ENCODE measurements at regions of chr7 and their contacts with region 1.

Region 1: GRCh38 chr7:116671681-116672595 is at the start of gene MET:
- DNase-seq: no peak
- H3K4me3 ChIP-seq: peak within 1 kb of the TSS; percentile 49 to 83 (median 67)
- H3K27ac ChIP-seq: peak within 1 kb of the TSS; percentile 80 to 89 (median 87)
- H3K4me1 ChIP-seq: peaks cover 6 to 37% (median 11%) of the 10 kb centered on the region in 3 donors
- H3K27me3 ChIP-seq: peaks cover 0 to 25% (median 0%) of the 10 kb centered on the region in 4 donors
- CTCF ChIP-seq: peak; percentile 50 to 78 (median 64)
- POLR2A ChIP-seq: peak in 1 of 4 donors; percentile 47
- total RNA-seq, gene MET: 3.8 to 25.0 (median 18.6) TPM

Region 2: DNA sequence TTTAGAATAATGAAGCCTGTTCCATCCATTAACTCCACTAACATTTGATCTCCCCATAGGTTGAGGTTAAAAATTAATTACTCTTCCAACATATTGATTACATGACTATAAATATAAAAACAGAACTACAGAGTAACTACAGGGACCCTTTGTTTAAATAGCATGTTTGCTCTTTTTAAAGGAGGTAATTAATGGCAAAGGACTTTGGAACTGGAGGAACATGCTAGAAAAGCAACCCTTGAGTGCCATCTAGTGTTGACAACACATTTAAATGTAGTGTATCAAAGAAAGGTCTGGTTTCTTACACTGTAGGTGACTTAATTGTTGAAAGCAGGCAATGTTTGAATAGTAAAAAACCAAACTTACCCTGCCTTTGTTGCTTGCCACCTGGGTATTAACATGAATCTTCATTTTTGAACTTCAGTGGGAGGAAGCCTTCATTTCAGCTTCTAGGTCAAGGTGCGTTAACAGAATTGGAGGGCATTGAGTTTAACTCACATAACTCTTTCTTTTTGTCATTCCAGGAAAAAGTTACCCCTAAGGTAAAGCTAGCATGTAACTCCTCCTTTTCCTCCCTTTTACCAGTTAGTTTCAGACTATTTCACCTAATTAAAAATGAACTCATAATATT is 137.8 kb after region 1 on chr7:
- intact Hi-C with region 1: loop called (anchors 10 kb)
- DNase-seq: no peak
- H3K4me3 ChIP-seq: no peak overlapping the region
- H3K27ac ChIP-seq: no peak overlapping the region
- H3K4me1 ChIP-seq: peaks cover 0 to 12% (median 0%) of the 10 kb centered on the region in 3 donors
- H3K27me3 ChIP-seq: no peaks in the 10 kb centered on the region
- CTCF ChIP-seq: peak in 5 of 6 experiments; percentile 52 to 77 (median 66)
- POLR2A ChIP-seq: no peak